ENCODE measurements at regions of chr19 and their contacts with region 1.

Region 1: DNA sequence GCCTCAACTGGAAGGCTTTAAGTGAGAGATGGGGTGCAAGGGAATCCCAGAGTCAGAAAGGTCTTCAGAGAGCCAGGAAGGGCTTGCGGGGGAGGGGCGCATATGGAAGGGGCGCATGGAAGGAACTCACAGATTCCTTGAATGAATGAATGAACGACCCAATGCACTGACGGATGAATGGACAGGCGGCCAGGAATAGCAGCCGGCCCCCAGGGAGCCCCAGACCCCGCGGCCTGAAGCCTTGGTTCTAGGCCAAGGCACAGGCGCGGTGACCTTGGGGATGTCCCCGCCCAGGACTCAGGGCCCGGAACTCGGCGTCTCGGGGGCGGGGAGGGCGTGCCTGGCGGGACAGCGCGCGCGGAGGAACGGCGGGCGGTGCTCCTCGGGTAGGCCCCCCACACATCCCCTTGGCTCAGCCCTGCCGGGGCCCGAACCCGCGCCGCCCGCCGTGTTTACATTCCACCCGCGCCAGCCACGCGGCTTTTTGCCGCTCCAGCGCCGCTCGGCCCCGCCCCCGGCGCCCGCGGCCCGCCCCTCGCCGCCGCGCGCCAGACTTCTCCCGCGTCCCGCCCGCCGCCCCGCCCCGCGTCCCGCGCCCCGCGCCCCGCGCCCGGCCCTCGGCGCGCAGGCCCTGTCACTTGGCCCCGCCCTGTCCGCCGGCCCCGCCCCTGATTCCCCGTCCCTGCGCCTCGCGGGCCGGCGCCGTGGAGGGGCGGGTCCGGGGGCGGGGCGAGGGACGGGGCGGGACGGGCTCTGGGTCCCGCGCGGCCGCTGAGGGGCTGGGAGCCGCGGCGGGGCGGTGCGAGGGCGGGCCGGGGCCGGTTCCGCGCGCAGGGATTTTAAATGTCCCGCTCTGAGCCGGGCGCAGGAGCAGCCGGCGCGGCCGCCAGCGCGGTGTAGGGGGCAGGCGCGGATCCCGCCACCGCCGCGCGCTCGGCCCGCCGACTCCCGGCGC is at the start of gene CCNE1:
- DNase-seq: peak; percentile 61
- H3K4me3 ChIP-seq: peak within 1 kb of the TSS; percentile 46
- CTCF ChIP-seq: no peak

Region 2: GRCh38 chr19:29731331-29731850 is 80.0 kb before region 1 on chr19:
- in situ Hi-C with region 1: loop called (anchors 5 kb)
- DNase-seq: no peak
- H3K4me3 ChIP-seq: no peak overlapping the region
- CTCF ChIP-seq: no peak